GM12878 (cell line): ENCODE measurements at regions of chr18 and their contacts with region 1.

Region 1: GRCh38 chr18:11149441-11150270 is at the start of gene PIEZO2:
- DNase-seq: peak; percentile 43
- ATAC-seq: peak; percentile 89
- H3K4me3 ChIP-seq: peak within 1 kb of the TSS; percentile 95
- H3K27ac ChIP-seq: peak within 1 kb of the TSS; percentile 88
- H3K4me1 ChIP-seq: peaks cover 23% of the 10 kb centered on the region
- H3K27me3 ChIP-seq: no peaks in the 10 kb centered on the region
- CTCF ChIP-seq: no peak
- EP300 ChIP-seq: no peak
- POLR2A ChIP-seq: peak; percentile 89
- RAD21 ChIP-seq: no peak
- polyA plus RNA-seq, gene PIEZO2: 6.7 to 7.1 TPM

Region 2: DNA sequence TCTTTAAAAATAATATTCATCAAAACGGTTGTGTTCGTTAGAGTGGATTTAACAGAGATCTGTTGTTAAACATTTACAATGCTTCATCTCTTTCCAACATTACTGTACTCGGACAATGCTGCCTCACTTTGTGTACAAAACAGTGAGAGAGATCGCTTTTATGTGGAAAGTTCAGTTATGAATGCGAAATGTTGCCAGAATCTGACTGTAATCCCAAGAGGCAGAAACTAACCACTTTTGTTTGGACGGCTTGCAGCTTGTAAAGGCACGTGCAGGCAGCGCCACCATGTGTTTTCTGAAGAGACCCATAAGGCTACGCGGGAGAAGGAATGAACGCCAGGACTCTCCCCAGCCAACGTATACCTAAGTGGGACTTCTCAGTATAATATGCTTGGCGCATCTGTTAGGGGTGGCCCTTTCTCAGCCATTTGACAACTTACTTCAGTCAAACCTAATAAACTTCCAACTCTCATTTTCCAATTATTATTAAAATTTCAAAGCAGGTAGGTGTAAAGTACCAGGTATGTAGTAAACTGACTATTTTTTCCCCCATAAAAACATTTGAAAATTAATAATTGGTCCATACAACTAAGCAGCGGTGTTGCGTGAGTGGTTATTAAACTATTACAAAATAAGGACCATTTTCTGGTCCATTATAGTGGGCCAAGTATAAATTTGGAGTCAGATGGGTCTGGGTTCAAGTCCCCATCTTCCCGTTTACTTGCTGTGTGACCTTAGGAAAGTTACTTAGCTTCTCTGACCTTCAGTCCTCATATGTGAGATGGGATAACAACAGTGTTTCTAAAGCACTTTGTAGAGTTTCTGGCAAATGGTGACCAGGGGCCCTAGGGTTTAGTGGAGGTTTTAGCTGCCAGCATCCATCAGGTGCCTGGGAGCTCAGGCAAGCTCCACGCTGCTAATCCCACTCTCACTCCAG is 629.4 kb before region 1 on chr18:
- CTCF ChIA-PET with region 1: interaction called, 8 read pairs
- POLR2A ChIA-PET with region 1: no interaction called
- RAD21 ChIA-PET with region 1: interaction called, 13 read pairs
- SMC1A ChIA-PET with region 1: interaction called, 3 read pairs
- in situ Hi-C with region 1: no loop called
- intact Hi-C with region 1: no loop called
- DNase-seq: peak; percentile 53
- ATAC-seq: peak; percentile 97
- H3K4me3 ChIP-seq: no peak overlapping the region
- H3K27ac ChIP-seq: no peak overlapping the region
- H3K4me1 ChIP-seq: peaks cover 6% of the 10 kb centered on the region
- H3K27me3 ChIP-seq: peaks cover 1 to 4% of the 10 kb centered on the region in 2 experiments; a peak in 1 of 4 replicates
- CTCF ChIP-seq: peak; percentile 86 to 92 (median 88)
- EP300 ChIP-seq: no peak
- POLR2A ChIP-seq: no peak
- RAD21 ChIP-seq: peak; percentile 98

Region 3: DNA sequence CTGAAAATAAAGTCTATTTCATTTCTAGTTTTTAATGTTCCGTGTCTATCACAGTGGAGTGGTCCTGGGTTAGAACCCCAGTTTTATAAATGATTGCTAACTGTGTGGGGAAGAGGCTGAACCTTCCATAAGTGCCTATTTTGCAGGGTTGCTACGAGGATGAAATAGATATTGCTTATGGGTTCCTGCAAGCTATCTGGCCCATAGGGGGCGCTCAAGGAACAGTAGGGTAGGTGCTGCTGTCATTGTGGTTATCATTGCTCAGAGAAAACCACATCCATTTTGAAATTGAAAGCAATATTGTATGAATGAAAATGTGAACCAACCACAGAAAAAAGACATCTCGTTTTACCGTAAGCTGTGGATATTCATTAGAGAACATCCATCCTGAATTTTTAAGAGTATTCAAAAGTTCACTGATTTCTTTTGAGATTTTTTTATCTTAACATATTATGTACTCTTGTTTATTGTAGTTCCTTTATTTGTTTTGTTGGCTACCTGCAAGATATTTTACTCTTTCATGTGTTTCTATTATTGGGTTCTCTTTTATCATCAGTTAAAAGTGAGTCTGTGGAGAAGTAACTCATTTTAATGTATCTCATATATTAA is 362.3 kb before region 1 on chr18:
- CTCF ChIA-PET with region 1: interaction called, 108 read pairs
- POLR2A ChIA-PET with region 1: interaction called, 3 read pairs
- RAD21 ChIA-PET with region 1: interaction called, 45 read pairs
- SMC1A ChIA-PET with region 1: interaction called, 120 read pairs
- in situ Hi-C with region 1: no loop called
- intact Hi-C with region 1: loop called (anchors 1 kb)
- DNase-seq: peak; percentile 77
- ATAC-seq: peak; percentile 96
- H3K4me3 ChIP-seq: no peak overlapping the region
- H3K27ac ChIP-seq: no peak overlapping the region
- H3K4me1 ChIP-seq: no peaks in the 10 kb centered on the region; the same call in 1 of the 2 replicates
- H3K27me3 ChIP-seq: no peaks in the 10 kb centered on the region
- CTCF ChIP-seq: peak; percentile 79 to 97 (median 82)
- EP300 ChIP-seq: peak; percentile 48 to 55; a peak in 2 of 4 replicates
- POLR2A ChIP-seq: no peak
- RAD21 ChIP-seq: peak; percentile 88

Region 4: GRCh38 chr18:10892786-10893185 is 256.9 kb before region 1 on chr18:
- CTCF ChIA-PET with region 1: interaction called, 13 read pairs
- POLR2A ChIA-PET with region 1: interaction called, 7 read pairs
- RAD21 ChIA-PET with region 1: interaction called, 7 read pairs
- SMC1A ChIA-PET with region 1: interaction called, 6 read pairs
- in situ Hi-C with region 1: no loop called
- intact Hi-C with region 1: no loop called
- DNase-seq: no peak
- ATAC-seq: peak; percentile 29; the same call in 1 of the 3 replicates
- H3K4me3 ChIP-seq: no peak overlapping the region
- H3K27ac ChIP-seq: no peak overlapping the region
- H3K4me1 ChIP-seq: peaks cover 13% of the 10 kb centered on the region
- H3K27me3 ChIP-seq: no peaks in the 10 kb centered on the region
- CTCF ChIP-seq: no peak
- EP300 ChIP-seq: no peak
- POLR2A ChIP-seq: no peak
- RAD21 ChIP-seq: no peak

Region 5: DNA sequence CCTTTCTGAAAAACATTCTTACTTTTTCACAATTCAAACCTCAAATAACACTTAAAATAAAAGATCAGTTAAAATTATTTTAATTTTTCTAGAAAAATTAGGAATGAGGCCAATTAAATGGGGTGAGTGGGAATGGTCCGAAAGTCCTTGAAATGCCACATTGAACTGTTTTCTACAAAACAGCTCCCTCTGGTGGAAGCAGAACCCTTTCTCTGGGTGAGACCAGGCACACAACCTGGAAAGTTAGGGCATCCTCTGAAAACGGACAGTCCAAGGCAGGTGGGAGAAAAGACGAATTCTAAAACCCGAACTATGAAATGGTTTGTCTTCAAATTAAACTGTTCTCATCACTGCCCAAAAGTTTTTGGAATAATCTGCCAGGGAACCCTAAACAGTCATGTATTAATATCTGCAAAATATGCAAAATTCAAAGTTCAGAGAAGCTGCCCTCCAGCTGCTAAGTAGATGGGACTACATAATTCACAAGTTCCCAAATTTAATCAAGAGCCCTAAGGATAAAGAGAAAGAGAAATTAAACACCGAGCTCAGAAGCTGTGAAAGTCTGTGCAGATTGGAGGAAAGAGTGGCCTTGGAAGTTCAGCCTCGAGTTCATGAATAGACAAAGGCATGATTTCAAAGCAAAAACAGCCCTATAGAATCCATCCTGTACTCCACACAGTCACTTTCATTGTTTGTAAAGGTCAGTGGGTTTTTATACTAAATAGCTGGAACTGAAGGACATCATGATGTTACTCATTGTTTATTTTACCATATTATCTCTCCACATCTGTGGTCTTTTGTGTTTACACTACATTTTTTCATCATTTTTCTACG is 108.6 kb before region 1 on chr18:
- CTCF ChIA-PET with region 1: interaction called, 87 read pairs
- POLR2A ChIA-PET with region 1: interaction called, 9 read pairs
- RAD21 ChIA-PET with region 1: interaction called, 64 read pairs
- SMC1A ChIA-PET with region 1: interaction called, 75 read pairs
- in situ Hi-C with region 1: no loop called
- intact Hi-C with region 1: loop called (anchors 2 kb)
- DNase-seq: no peak
- ATAC-seq: peak; percentile 75
- H3K4me3 ChIP-seq: no peak overlapping the region
- H3K27ac ChIP-seq: peak overlapping the region; percentile 52
- H3K4me1 ChIP-seq: peaks cover 30% of the 10 kb centered on the region
- H3K27me3 ChIP-seq: no peaks in the 10 kb centered on the region
- CTCF ChIP-seq: peak; percentile 67 to 74 (median 69); a peak in 5 of 6 replicates
- EP300 ChIP-seq: no peak
- POLR2A ChIP-seq: no peak
- RAD21 ChIP-seq: peak; percentile 88

Region 6: GRCh38 chr18:11163665-11164064 is 14.0 kb after region 1 on chr18:
- CTCF ChIA-PET with region 1: interaction called, 18 read pairs
- POLR2A ChIA-PET with region 1: interaction called, 3 read pairs
- RAD21 ChIA-PET with region 1: interaction called, 6 read pairs
- SMC1A ChIA-PET with region 1: interaction called, 10 read pairs
- in situ Hi-C with region 1: no loop called
- intact Hi-C with region 1: no loop called
- DNase-seq: no peak
- ATAC-seq: peak; percentile 94
- H3K4me3 ChIP-seq: no peak overlapping the region
- H3K27ac ChIP-seq: no peak overlapping the region
- H3K4me1 ChIP-seq: peaks cover 9% of the 10 kb centered on the region
- H3K27me3 ChIP-seq: no peaks in the 10 kb centered on the region
- CTCF ChIP-seq: peak; percentile 61 to 88 (median 62)
- EP300 ChIP-seq: no peak
- POLR2A ChIP-seq: no peak
- RAD21 ChIP-seq: peak; percentile 25; the same call in 1 of the 2 replicates